Esophagus muscularis mucosa (tissue), 4 donors: ENCODE measurements at regions of chr13 and their contacts with region 1.

Region 1: GRCh38 chr13:110396913-110397381 is 89.9 kb downstream of the COL4A2 start:
- DNase-seq: peak; percentile 97
- H3K4me3 ChIP-seq: peak overlapping the region; percentile 30 to 44 (median 34)
- H3K27ac ChIP-seq: peak overlapping the region; percentile 87 to 95 (median 91)
- H3K4me1 ChIP-seq: peaks cover 65 to 94% (median 92%) of the 10 kb centered on the region in 4 donors
- H3K27me3 ChIP-seq: no peaks in the 10 kb centered on the region
- CTCF ChIP-seq: no peak
- EP300 ChIP-seq: peak; percentile 79
- POLR2A ChIP-seq: no peak

Region 2: GRCh38 chr13:109756778-109757177 is 640.2 kb before region 1 on chr13:
- intact Hi-C with region 1: no loop called
- DNase-seq: no peak
- H3K4me3 ChIP-seq: no peak overlapping the region
- H3K27ac ChIP-seq: peak overlapping the region in 3 of 4 donors; percentile 20 to 40 (median 21)
- H3K4me1 ChIP-seq: peaks cover 21 to 46% (median 41%) of the 10 kb centered on the region in 4 donors
- H3K27me3 ChIP-seq: no peaks in the 10 kb centered on the region
- CTCF ChIP-seq: no peak
- EP300 ChIP-seq: no peak
- POLR2A ChIP-seq: no peak

Region 3: DNA sequence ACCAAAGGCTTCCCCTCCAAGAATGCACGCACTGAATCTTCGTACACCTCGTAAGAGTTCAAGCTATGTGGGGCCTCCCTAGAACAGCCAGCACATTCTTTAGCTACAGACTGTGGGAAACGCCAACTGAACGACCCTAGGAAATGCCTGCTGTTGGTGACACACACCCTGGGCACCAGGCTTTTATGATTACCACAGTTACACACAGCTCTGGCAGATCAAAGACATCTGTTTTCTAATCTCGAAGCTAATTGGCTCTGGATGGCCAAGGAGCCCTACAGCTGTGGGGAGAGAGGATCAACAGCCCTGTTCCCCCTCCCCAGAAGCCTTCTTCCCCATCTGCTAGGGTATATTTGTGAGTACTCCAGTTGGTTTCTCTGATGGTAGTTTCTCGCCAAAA is 213.0 kb before region 1 on chr13:
- intact Hi-C with region 1: no loop called
- DNase-seq: no peak
- H3K4me3 ChIP-seq: no peak overlapping the region
- H3K27ac ChIP-seq: no peak overlapping the region
- H3K4me1 ChIP-seq: peaks cover 11 to 13% (median 11%) of the 10 kb centered on the region in 4 donors
- H3K27me3 ChIP-seq: no peaks in the 10 kb centered on the region
- CTCF ChIP-seq: no peak
- EP300 ChIP-seq: no peak
- POLR2A ChIP-seq: no peak

Region 4: DNA sequence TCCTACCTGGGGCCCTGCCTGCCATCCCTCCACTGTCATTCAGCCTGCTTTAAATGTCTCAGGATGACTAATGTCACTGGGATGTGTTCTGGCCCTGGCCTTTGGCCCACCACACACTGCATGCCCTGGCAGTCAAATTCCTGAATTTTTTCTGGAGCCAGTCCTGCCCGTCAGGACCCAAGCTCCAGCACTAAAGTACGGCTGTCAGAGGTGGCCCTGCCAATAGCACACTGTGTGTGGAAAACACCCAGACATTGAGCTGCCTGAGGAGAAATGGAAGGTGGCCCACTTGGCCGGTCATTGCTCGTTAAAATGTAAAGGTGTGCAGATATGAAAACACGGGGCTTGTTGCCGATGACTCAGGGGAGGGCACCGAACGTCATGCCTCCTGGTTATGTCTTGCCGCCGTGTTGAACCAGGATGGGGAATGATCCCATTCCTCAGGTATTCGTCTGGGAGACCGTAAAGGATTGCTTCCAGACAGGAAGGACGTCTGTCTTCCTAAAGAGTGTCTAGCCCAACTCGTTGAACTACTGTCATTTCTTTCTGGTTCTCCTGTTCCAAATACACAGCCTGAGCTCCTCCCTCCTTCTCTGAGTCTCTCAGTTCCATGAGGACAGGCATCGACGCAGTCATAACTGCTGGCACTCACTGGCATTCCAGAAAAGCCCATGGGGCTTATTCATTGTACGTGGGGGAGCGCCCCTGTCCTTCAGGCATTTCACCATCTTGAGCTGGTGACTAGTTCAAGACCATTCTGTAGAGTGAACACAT is 49.2 kb before region 1 on chr13:
- intact Hi-C with region 1: loop called (anchors 5 kb)
- DNase-seq: no peak
- H3K4me3 ChIP-seq: no peak overlapping the region
- H3K27ac ChIP-seq: peak overlapping the region; percentile 91 to 98 (median 92)
- H3K4me1 ChIP-seq: peaks cover 57 to 98% (median 95%) of the 10 kb centered on the region in 4 donors
- H3K27me3 ChIP-seq: no peaks in the 10 kb centered on the region
- CTCF ChIP-seq: no peak
- EP300 ChIP-seq: no peak
- POLR2A ChIP-seq: no peak